Dendritic cell treated with granulocyte-macrophage colony-stimulating factor and Interleukin-4, amounts not matched to agents 40 ng/mL and 50 ng/mL, for 4 days (primary cell): ENCODE measurements at regions of chr20 and their contacts with region 1.

Region 1: GRCh38 chr20:38893565-38894090 is 32.6 kb upstream of the FAM83D start:
- H3K4me3 Mint-ChIP-seq: no peak overlapping the region
- H3K27ac Mint-ChIP-seq: no peak overlapping the region
- H3K4me1 Mint-ChIP-seq: peaks cover 19% of the 10 kb centered on the region
- H3K27me3 Mint-ChIP-seq: peaks cover 11% of the 10 kb centered on the region

Region 2: DNA sequence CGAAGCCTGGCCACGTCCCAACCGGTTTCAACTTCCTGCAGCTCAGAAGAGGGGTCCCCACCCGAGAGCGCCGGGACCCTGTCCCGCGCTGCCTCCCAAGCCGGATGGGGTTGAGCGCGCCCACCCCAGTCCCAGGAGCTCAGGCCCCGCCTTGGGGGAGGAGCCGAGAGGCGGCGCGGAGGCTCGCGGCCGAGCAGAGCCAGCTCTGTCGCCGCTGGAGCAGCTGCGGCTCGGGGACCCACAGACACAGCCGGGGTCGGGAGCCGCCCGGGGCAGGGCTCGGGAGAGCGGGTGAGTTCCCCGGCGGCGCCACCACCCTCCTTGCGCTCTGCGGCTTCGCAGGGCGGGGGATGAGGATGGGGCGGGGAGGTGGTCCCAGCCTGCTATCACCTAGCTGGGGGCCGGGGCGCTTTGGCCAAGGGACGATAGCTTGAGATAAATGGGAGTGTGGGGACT is 88.1 kb before region 1 on chr20 and contains the start of gene PPP1R16B:
- intact Hi-C with region 1: loop called (anchors 5 kb)
- H3K4me3 Mint-ChIP-seq: peak within 1 kb of the TSS; percentile 81
- H3K27ac Mint-ChIP-seq: peak within 1 kb of the TSS; percentile 48
- H3K4me1 Mint-ChIP-seq: peaks cover 42% of the 10 kb centered on the region
- H3K27me3 Mint-ChIP-seq: peaks cover 35% of the 10 kb centered on the region